ENCODE measurements at regions of chr2 and their contacts with region 1.

Region 1: DNA sequence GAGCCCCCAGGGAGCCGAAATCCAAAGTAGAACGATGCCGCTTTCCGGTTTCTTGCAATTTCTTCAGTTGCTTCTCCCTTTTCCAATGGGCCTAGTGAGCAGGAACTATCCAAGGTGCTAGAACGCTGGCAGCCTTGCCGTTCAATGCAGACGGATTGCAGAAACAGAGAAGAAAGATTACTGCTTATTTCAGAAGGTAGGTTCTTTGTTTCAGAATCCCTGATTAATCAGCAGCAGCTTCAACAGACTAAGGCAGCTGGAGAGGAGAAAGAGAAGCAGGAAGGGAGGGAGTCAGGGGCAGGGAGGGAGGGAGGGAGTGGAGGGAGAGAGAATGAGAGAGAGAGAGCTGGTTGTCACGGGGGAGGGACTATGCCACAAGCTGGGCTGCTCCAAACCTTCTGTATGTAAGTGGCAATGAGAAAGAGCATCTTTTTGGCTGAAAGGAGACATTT is 576 bp downstream of the NYAP2 start:
- DNase-seq: no peak
- H3K4me3 ChIP-seq: no peak overlapping the region
- H3K27ac ChIP-seq: no peak overlapping the region
- H3K4me1 ChIP-seq: no peaks in the 10 kb centered on the region
- H3K27me3 ChIP-seq: no peaks in the 10 kb centered on the region
- CTCF ChIP-seq: no peak
- POLR2A ChIP-seq: no peak

Region 2: GRCh38 chr2:224072554-224073188 is 1327.4 kb before region 1 on chr2:
- intact Hi-C with region 1: no loop called
- DNase-seq: no peak
- H3K4me3 ChIP-seq: no peak overlapping the region
- H3K27ac ChIP-seq: peak overlapping the region in 1 of 2 donors; percentile 52
- H3K4me1 ChIP-seq: no peaks in the 10 kb centered on the region
- H3K27me3 ChIP-seq: no peaks in the 10 kb centered on the region
- CTCF ChIP-seq: no peak
- POLR2A ChIP-seq: no peak

Region 3: GRCh38 chr2:225182126-225182525 is 218.0 kb before region 1 on chr2:
- intact Hi-C with region 1: loop called (anchors 5 kb)
- DNase-seq: no peak
- H3K4me3 ChIP-seq: no peak overlapping the region
- H3K27ac ChIP-seq: no peak overlapping the region
- H3K4me1 ChIP-seq: no peaks in the 10 kb centered on the region
- H3K27me3 ChIP-seq: no peaks in the 10 kb centered on the region
- CTCF ChIP-seq: no peak
- POLR2A ChIP-seq: no peak

Region 4: DNA sequence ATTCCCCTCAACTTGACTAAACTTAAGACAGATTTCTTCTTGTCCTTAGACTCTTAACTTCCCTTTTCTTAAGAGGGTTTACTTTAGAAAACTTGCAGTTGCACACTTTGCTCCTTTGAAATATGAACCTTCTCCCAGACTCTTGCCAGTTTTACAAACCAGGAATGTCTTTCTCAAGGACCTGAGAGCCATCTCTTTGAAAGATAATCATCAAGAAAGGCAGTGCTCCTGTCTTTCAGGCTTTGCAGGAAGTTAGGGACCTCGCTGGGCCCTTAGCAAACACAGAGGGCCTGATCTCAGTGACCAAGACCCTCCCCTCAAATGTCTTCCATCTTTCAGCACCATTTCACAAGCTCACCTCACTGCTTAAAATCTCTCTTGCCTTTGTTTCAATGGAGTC is 32.6 kb before region 1 on chr2:
- intact Hi-C with region 1: loop called (anchors 1 kb)
- DNase-seq: no peak
- H3K4me3 ChIP-seq: no peak overlapping the region
- H3K27ac ChIP-seq: no peak overlapping the region
- H3K4me1 ChIP-seq: no peaks in the 10 kb centered on the region
- H3K27me3 ChIP-seq: no peaks in the 10 kb centered on the region
- CTCF ChIP-seq: no peak
- POLR2A ChIP-seq: no peak

Region 5: DNA sequence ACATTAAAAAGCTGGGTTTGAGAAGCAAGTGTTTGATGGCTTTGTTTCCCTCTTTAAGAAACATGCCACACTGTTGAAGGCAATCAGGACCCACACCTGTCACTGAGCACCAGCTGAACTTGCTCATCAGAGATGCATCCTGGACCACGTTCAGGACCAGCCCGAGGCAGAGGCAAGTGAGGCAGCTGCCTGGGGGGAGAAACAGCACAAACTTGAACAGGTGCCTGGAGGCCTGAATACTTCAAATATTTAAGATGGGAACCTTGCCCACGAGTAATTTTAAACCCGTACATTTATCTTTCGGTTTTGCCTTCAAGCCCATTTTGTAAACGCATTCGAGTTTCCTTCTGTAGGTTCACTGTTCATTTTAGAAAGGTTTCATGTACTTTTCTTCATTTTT is 420.7 kb after region 1 on chr2:
- intact Hi-C with region 1: no loop called
- DNase-seq: no peak
- H3K4me3 ChIP-seq: no peak overlapping the region
- H3K27ac ChIP-seq: no peak overlapping the region
- H3K4me1 ChIP-seq: no peaks in the 10 kb centered on the region
- H3K27me3 ChIP-seq: no peaks in the 10 kb centered on the region
- CTCF ChIP-seq: no peak
- POLR2A ChIP-seq: no peak